Mammary epithelial cell (primary cell): ENCODE measurements at regions of chr12 and their contacts with region 1.

Region 1: DNA sequence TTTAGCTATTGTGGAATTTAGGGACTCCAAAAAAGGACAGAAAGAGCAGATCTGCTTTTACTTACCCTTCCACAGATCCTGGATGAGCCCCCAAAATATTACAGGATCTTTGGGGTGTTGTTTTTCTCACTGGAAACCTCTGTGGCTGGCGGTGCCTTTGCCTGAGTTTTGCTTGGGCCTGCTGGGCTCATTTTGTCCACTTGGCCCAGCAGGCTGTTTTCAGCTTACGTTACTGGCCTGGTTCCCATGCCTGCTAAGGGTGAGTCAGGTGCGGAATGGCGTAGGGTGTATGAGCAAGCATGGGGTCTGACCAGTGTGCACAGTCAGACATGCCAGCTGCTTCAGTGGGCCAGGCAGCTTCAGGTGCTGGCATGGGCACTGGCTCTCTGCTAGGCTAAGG is 45.8 kb downstream of the HSD17B6 start:
- DNase-seq: no peak
- H3K4me3 ChIP-seq: no peak overlapping the region
- H3K27ac ChIP-seq: no peak overlapping the region
- H3K4me1 ChIP-seq: no peaks in the 10 kb centered on the region
- H3K27me3 ChIP-seq: no peaks in the 10 kb centered on the region
- CTCF ChIP-seq: no peak

Region 2: GRCh38 chr12:56657416-56658379 is 151.3 kb before region 1 on chr12:
- CTCF ChIA-PET with region 1: no interaction called
- dilution Hi-C with region 1: no loop called
- in situ Hi-C with region 1: no loop called
- intact Hi-C with region 1: no loop called
- DNase-seq: peak; percentile 51
- H3K4me3 ChIP-seq: no peak overlapping the region
- H3K27ac ChIP-seq: no peak overlapping the region
- H3K4me1 ChIP-seq: peaks cover 9% of the 10 kb centered on the region
- H3K27me3 ChIP-seq: no peaks in the 10 kb centered on the region
- CTCF ChIP-seq: no peak

Region 3: DNA sequence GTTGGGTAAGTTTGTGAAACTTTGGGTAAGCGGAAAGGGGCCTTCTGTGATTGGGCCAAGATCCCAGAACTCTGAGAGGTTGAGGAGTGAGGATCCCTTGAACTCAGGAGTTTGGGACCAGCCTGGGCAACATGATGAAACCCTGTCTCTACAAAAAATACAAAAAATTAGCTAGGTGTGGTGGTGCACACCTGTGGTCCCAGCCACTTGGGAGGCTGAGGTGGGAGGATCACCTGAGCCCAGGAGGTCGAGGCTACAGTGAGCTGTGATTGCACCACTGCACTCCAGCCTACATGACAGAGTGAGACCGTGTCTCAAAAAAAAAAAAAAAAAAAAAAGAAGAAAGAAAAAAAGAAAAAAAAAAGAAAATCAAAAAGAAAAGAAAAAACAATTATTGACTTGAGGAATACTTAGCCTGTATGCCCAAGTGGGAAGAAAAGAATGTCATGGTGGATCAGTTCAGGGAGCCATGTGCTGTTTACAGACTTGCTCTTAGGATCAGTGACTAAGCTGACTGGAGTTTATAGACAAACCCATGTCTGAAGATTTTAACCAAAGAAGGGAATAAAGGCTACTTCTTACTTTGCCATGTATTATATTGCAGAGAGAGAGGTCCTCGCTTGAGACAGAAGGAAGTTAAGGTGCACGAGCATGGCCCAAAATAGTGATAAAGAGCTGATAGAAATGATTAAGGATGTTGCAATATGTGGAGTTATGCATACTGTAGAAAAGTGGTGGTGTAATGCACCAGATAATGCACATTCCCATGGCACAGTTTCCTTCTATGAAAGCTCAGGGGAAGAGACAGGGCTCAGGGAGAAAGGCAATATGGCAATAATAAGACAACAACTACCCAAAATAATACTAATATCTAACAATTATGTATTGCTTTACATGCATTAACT is 44.9 kb before region 1 on chr12:
- CTCF ChIA-PET with region 1: no interaction called
- dilution Hi-C with region 1: no loop called
- in situ Hi-C with region 1: no loop called
- intact Hi-C with region 1: loop called (anchors 5 kb)
- DNase-seq: no peak
- H3K4me3 ChIP-seq: no peak overlapping the region
- H3K27ac ChIP-seq: no peak overlapping the region
- H3K4me1 ChIP-seq: no peaks in the 10 kb centered on the region
- H3K27me3 ChIP-seq: no peaks in the 10 kb centered on the region
- CTCF ChIP-seq: no peak